Adrenal gland (tissue), 19 donors: ENCODE measurements at regions of chr7 and their contacts with region 1.

Region 1: DNA sequence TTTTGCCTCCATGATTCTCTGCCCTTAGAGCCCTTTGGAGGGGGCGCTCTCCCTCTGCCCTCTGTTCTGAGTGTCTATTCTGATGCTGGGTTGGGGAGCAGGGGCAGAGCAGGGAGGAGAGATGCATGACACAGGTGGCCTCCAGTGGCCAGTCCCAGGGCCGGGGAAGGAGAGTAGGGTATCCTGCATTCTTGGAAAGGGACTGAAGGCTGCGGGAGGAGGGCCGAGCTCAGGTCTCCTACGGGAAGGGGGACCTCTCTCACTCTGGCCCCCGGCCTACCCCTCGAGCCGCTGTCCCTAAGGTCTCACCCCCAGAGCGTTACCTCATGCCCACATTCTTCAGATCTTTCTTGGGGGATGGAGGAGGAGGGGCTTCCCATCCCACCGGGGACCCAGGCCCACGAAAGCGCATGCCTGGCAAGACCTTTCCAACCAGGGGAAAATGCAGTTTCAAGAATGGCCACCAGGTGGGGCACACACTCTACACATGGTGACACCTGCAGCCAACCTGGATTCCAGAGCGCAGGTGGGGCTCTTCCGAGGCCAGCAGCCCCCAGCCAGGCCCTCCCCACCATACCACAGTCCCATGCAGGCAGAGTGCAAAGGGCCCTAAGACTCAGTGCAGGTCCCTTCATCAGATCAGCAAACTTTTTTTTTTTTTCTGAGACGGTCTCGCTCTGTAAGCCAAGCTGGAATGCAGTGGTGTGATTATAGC is 86.4 kb downstream of the MYL10 start:
- DNase-seq: peak; percentile 56 to 87 (median 76)
- H3K4me3 ChIP-seq: no peak overlapping the region
- H3K27ac ChIP-seq: no peak overlapping the region
- H3K4me1 ChIP-seq: no peaks in the 10 kb centered on the region
- H3K27me3 ChIP-seq: no peaks in the 10 kb centered on the region
- CTCF ChIP-seq: peak; percentile 75 to 93 (median 90)
- POLR2A ChIP-seq: no peak

Region 2: GRCh38 chr7:101363734-101364374 is 178.8 kb before region 1 on chr7:
- intact Hi-C with region 1: loop called in 1 of 2 experiments (anchors 10 kb)
- DNase-seq: peak; percentile 69 to 81 (median 75)
- H3K4me3 ChIP-seq: peak overlapping the region in 2 of 4 donors; percentile 43 to 70
- H3K27ac ChIP-seq: peak overlapping the region in 4 of 5 donors; percentile 47 to 70 (median 62)
- H3K4me1 ChIP-seq: peaks cover 0 to 12% of the 10 kb centered on the region in 2 donors
- H3K27me3 ChIP-seq: no peaks in the 10 kb centered on the region
- CTCF ChIP-seq: peak; percentile 66 to 96 (median 86)
- POLR2A ChIP-seq: peak in 1 of 2 donors; percentile 29

Region 3: GRCh38 chr7:101378751-101379184 is 163.9 kb before region 1 on chr7:
- intact Hi-C with region 1: no loop called
- DNase-seq: no peak
- H3K4me3 ChIP-seq: no peak overlapping the region
- H3K27ac ChIP-seq: no peak overlapping the region
- H3K4me1 ChIP-seq: no peaks in the 10 kb centered on the region
- H3K27me3 ChIP-seq: no peaks in the 10 kb centered on the region
- CTCF ChIP-seq: no peak
- POLR2A ChIP-seq: no peak

Region 4: DNA sequence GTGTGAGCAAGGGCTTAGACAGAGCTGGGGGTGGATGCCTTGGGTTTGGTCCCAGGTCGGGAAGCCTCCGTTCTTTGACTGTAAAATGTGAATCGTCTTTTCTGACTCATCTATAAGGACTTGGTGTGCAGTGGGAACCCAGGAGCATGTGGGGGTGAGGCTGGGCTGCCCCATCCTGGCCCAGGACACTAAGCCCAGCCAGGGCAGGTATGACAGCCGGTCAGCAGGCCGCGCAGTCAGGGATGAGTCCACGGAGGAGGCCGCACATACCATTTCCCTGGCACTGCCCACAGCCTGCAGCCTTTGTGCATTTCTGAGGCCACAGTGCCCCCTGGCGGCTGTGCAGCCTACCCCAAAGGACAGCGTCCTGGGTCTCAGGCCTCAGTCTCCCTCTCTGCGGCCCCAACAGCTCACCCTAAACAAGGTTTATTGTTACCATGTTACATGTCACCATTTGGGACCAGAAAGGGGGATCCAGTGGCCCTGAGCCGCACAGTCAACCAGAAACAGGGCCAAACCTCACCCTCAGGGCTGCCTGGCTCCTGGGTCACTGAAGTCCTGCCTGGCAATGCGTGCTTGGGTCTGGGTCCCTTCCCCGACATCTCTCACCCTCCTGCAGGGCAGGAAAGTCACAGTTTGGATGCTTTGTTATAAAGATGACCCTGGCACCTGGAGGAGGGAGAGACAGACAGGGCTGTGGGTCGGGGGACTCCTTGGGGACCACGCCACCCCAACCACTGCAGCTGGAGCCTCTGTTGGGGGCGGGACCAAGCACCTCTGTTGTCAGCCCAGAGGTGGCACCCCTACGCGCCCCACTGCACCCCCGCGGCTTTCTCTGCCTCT is 729.6 kb after region 1 on chr7:
- intact Hi-C with region 1: loop called (anchors 2 to 5 kb)
- DNase-seq: peak; percentile 77 to 92 (median 85)
- H3K4me3 ChIP-seq: no peak overlapping the region
- H3K27ac ChIP-seq: no peak overlapping the region
- H3K4me1 ChIP-seq: peaks cover 0 to 4% of the 10 kb centered on the region in 2 donors
- H3K27me3 ChIP-seq: no peaks in the 10 kb centered on the region
- CTCF ChIP-seq: peak; percentile 85 to 94 (median 93)
- POLR2A ChIP-seq: no peak